ENCODE measurements at regions of chr21 and their contacts with region 1.

Region 1: GRCh38 chr21:25801217-25802014 is 66.6 kb downstream of the GABPA start:
- DNase-seq: peak; percentile 91 to 97 (median 95)
- H3K4me3 ChIP-seq: peak overlapping the region in 4 of 7 experiments; percentile 20 to 51 (median 28)
- H3K27ac ChIP-seq: no peak overlapping the region
- H3K4me1 ChIP-seq: peaks cover 0 to 4% (median 0%) of the 10 kb centered on the region in 4 experiments
- H3K27me3 ChIP-seq: no peaks in the 10 kb centered on the region

Region 2: GRCh38 chr21:25790122-25790877 is 11.1 kb before region 1 on chr21:
- CTCF ChIA-PET with region 1: interaction called, 16 read pairs
- POLR2A ChIA-PET with region 1: no interaction called
- DNase-seq: peak; percentile 38 to 68 (median 61)
- H3K4me3 ChIP-seq: peak overlapping the region in 6 of 7 experiments; percentile 5 to 82 (median 66)
- H3K27ac ChIP-seq: no peak overlapping the region
- H3K4me1 ChIP-seq: peaks cover 0 to 9% (median 6%) of the 10 kb centered on the region in 4 experiments
- H3K27me3 ChIP-seq: no peaks in the 10 kb centered on the region

Measured in common myeloid progenitor, CD34-positive (primary cell).